ENCODE measurements at regions of chr10 and their contacts with region 1.

Region 1: GRCh38 chr10:122142641-122143237 is 128.4 kb upstream of the BTBD16 start:
- DNase-seq: no peak
- H3K4me3 ChIP-seq: no peak overlapping the region
- H3K27ac ChIP-seq: peak overlapping the region; percentile 80 to 88 (median 86)
- H3K4me1 ChIP-seq: peaks cover 0 to 68% (median 60%) of the 10 kb centered on the region in 4 donors
- H3K27me3 ChIP-seq: no peaks in the 10 kb centered on the region
- CTCF ChIP-seq: peak; percentile 78 to 99 (median 94)
- EP300 ChIP-seq: no peak
- POLR2A ChIP-seq: no peak

Region 2: GRCh38 chr10:121696854-121697253 is 445.9 kb before region 1 on chr10:
- intact Hi-C with region 1: no loop called
- DNase-seq: no peak
- H3K4me3 ChIP-seq: no peak overlapping the region
- H3K27ac ChIP-seq: no peak overlapping the region
- H3K4me1 ChIP-seq: peaks cover 0 to 2% (median under 1%) of the 10 kb centered on the region in 4 donors
- H3K27me3 ChIP-seq: no peaks in the 10 kb centered on the region
- CTCF ChIP-seq: peak in 2 of 4 experiments; percentile 26 to 35
- EP300 ChIP-seq: no peak
- POLR2A ChIP-seq: no peak

Region 3: GRCh38 chr10:122191936-122192541 is 49.3 kb after region 1 on chr10:
- intact Hi-C with region 1: loop called (anchors 5 kb)
- DNase-seq: peak; percentile 75
- H3K4me3 ChIP-seq: peak overlapping the region in 1 of 4 donors; percentile 9
- H3K27ac ChIP-seq: peak overlapping the region; percentile 57 to 82 (median 77)
- H3K4me1 ChIP-seq: peaks cover 0 to 67% (median 46%) of the 10 kb centered on the region in 4 donors
- H3K27me3 ChIP-seq: no peaks in the 10 kb centered on the region
- CTCF ChIP-seq: no peak
- EP300 ChIP-seq: peak in 1 of 4 donors; percentile 39
- POLR2A ChIP-seq: no peak

Region 4: GRCh38 chr10:122213766-122214165 is 71.0 kb after region 1 on chr10:
- intact Hi-C with region 1: loop called (anchors 5 kb)
- DNase-seq: no peak
- H3K4me3 ChIP-seq: no peak overlapping the region
- H3K27ac ChIP-seq: no peak overlapping the region
- H3K4me1 ChIP-seq: no peaks in the 10 kb centered on the region
- H3K27me3 ChIP-seq: no peaks in the 10 kb centered on the region
- CTCF ChIP-seq: no peak
- EP300 ChIP-seq: no peak
- POLR2A ChIP-seq: no peak

Region 5: GRCh38 chr10:122267849-122268737 is 125.4 kb after region 1 on chr10:
- intact Hi-C with region 1: loop called (anchors 5 kb)
- DNase-seq: peak; percentile 71
- H3K4me3 ChIP-seq: no peak overlapping the region
- H3K27ac ChIP-seq: no peak overlapping the region
- H3K4me1 ChIP-seq: peaks cover 0 to 13% (median 8%) of the 10 kb centered on the region in 4 donors
- H3K27me3 ChIP-seq: no peaks in the 10 kb centered on the region
- CTCF ChIP-seq: peak; percentile 61 to 96 (median 78)
- EP300 ChIP-seq: no peak
- POLR2A ChIP-seq: no peak

Region 6: GRCh38 chr10:122307669-122308486 is 165.1 kb after region 1 on chr10:
- intact Hi-C with region 1: no loop called
- DNase-seq: peak; percentile 95
- H3K4me3 ChIP-seq: peak overlapping the region in 3 of 4 donors; percentile 12 to 23 (median 22)
- H3K27ac ChIP-seq: peak overlapping the region; percentile 77 to 94 (median 89)
- H3K4me1 ChIP-seq: peaks cover 0 to 50% (median 40%) of the 10 kb centered on the region in 4 donors
- H3K27me3 ChIP-seq: no peaks in the 10 kb centered on the region
- CTCF ChIP-seq: no peak
- EP300 ChIP-seq: peak; percentile 79 to 96 (median 92)
- POLR2A ChIP-seq: no peak

Region 7: DNA sequence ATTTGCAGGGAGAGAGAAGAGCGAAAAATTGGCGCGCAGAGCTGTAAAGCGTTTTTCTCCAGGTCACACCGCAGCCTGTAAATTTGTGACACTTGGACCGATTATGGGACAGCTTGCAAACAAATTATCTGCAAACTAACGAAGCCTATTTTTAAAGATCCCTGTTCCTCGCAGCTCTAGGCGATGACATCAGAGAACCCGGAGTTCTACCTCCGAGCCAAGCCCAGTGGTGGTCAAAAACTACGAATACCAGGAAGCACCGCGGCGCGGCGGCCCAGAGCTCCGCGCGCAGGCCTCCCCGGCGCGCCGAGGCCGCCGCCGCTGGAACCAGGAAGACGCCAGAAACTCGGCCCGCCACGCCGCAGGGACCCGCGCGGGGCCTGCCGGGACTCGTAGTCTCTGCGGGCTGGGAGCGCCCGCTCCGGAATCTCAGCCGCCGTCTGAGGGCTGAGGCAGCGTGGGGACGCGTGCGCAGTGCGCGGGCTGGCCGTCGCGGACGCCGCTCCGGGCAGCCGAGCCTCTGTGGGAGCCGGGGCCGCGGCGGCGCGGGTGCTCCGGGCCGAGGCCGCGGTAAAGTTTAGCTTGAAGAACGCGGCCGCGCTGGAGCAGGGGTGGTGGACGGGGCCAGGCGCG is 231.6 kb after region 1 on chr10 and contains the start of gene PLEKHA1:
- intact Hi-C with region 1: loop called (anchors 5 kb)
- DNase-seq: peak; percentile 97
- H3K4me3 ChIP-seq: peak within 1 kb of the TSS; percentile 69 to 97 (median 94)
- H3K27ac ChIP-seq: peak within 1 kb of the TSS; percentile 98 to 100 (median 98)
- H3K4me1 ChIP-seq: peaks cover 0 to 61% (median 45%) of the 10 kb centered on the region in 4 donors
- H3K27me3 ChIP-seq: no peaks in the 10 kb centered on the region
- CTCF ChIP-seq: no peak
- EP300 ChIP-seq: no peak
- POLR2A ChIP-seq: no peak
- total RNA-seq, gene PLEKHA1: 34.1 to 53.2 (median 50.4) TPM

Region 8: GRCh38 chr10:122435212-122435827 is 292.6 kb after region 1 on chr10:
- intact Hi-C with region 1: loop called (anchors 10 kb)
- DNase-seq: no peak
- H3K4me3 ChIP-seq: no peak overlapping the region
- H3K27ac ChIP-seq: peak overlapping the region in 1 of 4 donors; percentile 13
- H3K4me1 ChIP-seq: no peaks in the 10 kb centered on the region
- H3K27me3 ChIP-seq: no peaks in the 10 kb centered on the region
- CTCF ChIP-seq: peak; percentile 50 to 68 (median 60)
- EP300 ChIP-seq: no peak
- POLR2A ChIP-seq: no peak